Activated B cell treated with CpG ODN at 0.5 μM for 24 hours (primary cell): ENCODE measurements at regions of chr17 and their contacts with region 1.

Region 1: GRCh38 chr17:59619293-59620063 is at the start of gene CLTC:
- DNase-seq: peak; percentile 89
- ATAC-seq: peak; percentile 83
- H3K4me3 Mint-ChIP-seq: peak within 1 kb of the TSS; percentile 94
- H3K27ac Mint-ChIP-seq: peak within 1 kb of the TSS; percentile 98
- H3K4me1 Mint-ChIP-seq: peaks cover 59% of the 10 kb centered on the region
- H3K27me3 Mint-ChIP-seq: no peaks in the 10 kb centered on the region
- CTCF ChIP-seq: no peak
- total RNA-seq, gene CLTC: 148 and 189 TPM in 2 replicates

Region 2: DNA sequence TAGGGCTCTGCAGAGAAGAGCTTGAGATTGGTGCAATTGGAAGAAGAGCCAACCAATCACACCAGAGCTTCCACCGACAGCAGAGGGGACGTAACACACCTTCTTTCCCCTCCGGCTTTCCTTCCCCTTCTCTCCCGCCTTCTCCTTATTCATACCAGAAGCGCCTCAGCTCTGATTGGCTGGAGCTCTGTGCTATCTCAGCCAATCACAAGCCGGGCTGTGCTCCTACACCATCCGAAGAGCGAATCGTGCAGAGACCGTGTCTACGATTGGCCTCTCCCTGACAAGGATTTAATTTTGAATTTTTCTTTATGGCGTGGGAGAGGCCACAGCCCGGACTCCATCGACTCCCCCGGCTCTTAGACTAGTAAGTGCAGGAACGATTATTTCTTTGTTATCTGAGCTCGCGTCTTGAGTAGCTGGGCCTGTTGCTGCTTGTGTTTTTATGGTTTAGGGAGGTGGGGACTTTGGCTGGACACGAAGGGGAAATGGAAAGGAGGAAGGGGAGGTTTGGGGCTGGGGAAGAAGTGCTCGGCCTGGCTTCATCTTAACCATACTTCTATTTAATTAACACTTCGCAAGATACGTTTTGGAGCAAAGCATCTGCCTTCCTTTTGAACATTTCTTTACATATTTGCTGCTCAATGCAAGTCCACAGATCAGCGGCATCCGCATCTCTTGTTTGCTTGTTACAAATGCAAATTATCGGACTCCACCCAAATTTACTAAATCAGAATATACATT is 463.9 kb before region 1 on chr17 and contains the start of gene PRR11:
- CTCF ChIA-PET with region 1: no interaction called
- POLR2A ChIA-PET with region 1: interaction called, 6 read pairs
- intact Hi-C with region 1: loop called (anchors 1 kb)
- DNase-seq: peak; percentile 65
- ATAC-seq: peak; percentile 88
- H3K4me3 Mint-ChIP-seq: no peak within 1 kb of the TSS
- H3K27ac Mint-ChIP-seq: no peak within 1 kb of the TSS
- H3K4me1 Mint-ChIP-seq: peaks cover 16% of the 10 kb centered on the region
- H3K27me3 Mint-ChIP-seq: no peaks in the 10 kb centered on the region
- CTCF ChIP-seq: no peak
- total RNA-seq, gene PRR11: 2.4 and 4.8 TPM in 2 replicates

Region 3: DNA sequence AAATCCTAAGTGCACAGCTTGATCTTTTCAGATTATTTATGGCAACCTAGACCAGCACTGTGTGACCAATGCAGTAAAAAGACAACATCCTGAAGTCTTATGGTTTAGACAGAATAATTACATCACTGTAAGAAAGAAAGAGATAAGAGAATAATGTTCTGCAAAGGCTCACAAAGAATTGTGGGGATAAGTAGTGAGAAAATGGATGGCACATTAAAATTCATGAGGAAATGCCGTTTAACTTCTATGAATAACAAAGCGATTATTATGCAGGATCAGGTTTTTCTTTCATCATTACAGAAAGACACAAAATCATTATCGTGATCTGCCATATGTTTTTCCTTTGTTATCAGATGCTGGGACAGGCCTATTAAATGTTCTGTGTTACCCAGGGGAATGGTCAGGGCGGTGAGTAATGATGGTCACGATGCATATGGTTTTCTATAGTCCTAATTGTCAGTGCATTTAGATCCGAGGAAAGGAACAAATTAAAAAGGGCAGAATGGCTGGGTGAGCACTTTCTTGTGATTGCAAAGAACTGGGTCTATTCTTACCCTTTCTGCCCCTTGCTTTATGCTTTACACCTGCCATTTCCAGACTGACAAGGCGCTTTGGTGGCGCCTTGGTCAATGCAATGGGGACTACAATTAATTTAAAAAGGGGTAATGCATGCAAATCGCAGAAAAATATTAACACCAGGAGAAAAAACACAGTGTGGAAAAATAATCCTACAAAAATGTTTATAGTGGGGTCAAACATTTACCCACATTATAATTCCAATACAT is 72.2 kb before region 1 on chr17:
- CTCF ChIA-PET with region 1: no interaction called
- POLR2A ChIA-PET with region 1: no interaction called
- intact Hi-C with region 1: no loop called
- DNase-seq: no peak
- ATAC-seq: no peak
- H3K4me3 Mint-ChIP-seq: no peak overlapping the region
- H3K27ac Mint-ChIP-seq: no peak overlapping the region
- H3K4me1 Mint-ChIP-seq: no peaks in the 10 kb centered on the region
- H3K27me3 Mint-ChIP-seq: peaks cover 1% of the 10 kb centered on the region
- CTCF ChIP-seq: no peak

Region 4: DNA sequence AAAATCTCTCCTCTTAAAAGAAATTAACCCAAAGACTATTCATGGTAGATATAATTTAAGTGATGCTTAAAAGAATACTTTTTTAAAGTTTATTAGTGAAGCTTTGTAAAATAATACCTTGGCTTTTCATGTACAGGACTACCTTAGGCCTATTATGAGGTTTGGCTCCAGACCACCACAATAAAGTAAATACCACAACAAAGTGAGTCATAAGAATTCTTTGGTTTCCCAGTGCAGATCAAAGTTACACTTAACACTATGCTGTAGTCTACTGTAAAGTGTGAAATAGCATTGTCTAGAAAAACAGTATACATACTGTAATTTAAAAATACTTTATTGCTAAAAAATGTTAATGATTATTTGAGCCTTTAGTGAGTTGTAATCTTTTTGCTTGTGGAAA is 31.9 kb after region 1 on chr17:
- CTCF ChIA-PET with region 1: no interaction called
- POLR2A ChIA-PET with region 1: interaction called, 8 read pairs
- intact Hi-C with region 1: loop called (anchors 5 kb)
- DNase-seq: no peak
- ATAC-seq: no peak
- H3K4me3 Mint-ChIP-seq: no peak overlapping the region
- H3K27ac Mint-ChIP-seq: no peak overlapping the region
- H3K4me1 Mint-ChIP-seq: peaks cover 7% of the 10 kb centered on the region
- H3K27me3 Mint-ChIP-seq: no peaks in the 10 kb centered on the region
- CTCF ChIP-seq: no peak

Region 5: GRCh38 chr17:59707114-59707970 is 87.9 kb after region 1 on chr17 and contains the starts of genes PTRH2 and VMP1:
- CTCF ChIA-PET with region 1: no interaction called
- POLR2A ChIA-PET with region 1: interaction called, 45 read pairs
- intact Hi-C with region 1: loop called (anchors 1 kb)
- DNase-seq: peak; percentile 79
- ATAC-seq: peak; percentile 95
- H3K4me3 Mint-ChIP-seq: peak within 1 kb of the TSS; percentile 99
- H3K27ac Mint-ChIP-seq: peak within 1 kb of the TSS; percentile 97
- H3K4me1 Mint-ChIP-seq: peaks cover 72% of the 10 kb centered on the region
- H3K27me3 Mint-ChIP-seq: no peaks in the 10 kb centered on the region
- CTCF ChIP-seq: no peak
- total RNA-seq, gene PTRH2: 27.0 and 29.9 TPM in 2 replicates
- total RNA-seq, gene VMP1: 158 and 176 TPM in 2 replicates

Region 6: DNA sequence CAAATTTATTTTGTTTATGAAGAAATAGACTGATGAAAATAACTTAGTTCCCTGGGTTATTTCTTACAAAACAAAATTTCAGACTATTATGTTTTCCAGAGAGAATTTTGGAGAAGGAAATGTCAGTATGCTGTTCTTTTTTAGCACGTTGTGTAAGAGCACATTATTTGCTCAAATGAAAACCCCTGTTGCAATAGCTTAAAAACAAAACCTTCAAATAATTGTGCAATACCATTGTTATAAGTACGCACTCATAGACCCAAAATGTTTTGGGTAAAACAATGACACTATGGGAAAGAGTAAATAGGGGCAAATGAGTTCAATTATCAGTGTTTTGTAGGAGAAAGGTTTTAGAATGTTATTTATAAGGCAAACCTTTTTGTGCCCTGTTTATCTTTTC is 106.2 kb after region 1 on chr17:
- CTCF ChIA-PET with region 1: no interaction called
- POLR2A ChIA-PET with region 1: no interaction called
- intact Hi-C with region 1: no loop called
- DNase-seq: no peak
- ATAC-seq: no peak
- H3K4me3 Mint-ChIP-seq: no peak overlapping the region
- H3K27ac Mint-ChIP-seq: no peak overlapping the region
- H3K4me1 Mint-ChIP-seq: peaks cover 2% of the 10 kb centered on the region
- H3K27me3 Mint-ChIP-seq: no peaks in the 10 kb centered on the region
- CTCF ChIP-seq: no peak

Region 7: DNA sequence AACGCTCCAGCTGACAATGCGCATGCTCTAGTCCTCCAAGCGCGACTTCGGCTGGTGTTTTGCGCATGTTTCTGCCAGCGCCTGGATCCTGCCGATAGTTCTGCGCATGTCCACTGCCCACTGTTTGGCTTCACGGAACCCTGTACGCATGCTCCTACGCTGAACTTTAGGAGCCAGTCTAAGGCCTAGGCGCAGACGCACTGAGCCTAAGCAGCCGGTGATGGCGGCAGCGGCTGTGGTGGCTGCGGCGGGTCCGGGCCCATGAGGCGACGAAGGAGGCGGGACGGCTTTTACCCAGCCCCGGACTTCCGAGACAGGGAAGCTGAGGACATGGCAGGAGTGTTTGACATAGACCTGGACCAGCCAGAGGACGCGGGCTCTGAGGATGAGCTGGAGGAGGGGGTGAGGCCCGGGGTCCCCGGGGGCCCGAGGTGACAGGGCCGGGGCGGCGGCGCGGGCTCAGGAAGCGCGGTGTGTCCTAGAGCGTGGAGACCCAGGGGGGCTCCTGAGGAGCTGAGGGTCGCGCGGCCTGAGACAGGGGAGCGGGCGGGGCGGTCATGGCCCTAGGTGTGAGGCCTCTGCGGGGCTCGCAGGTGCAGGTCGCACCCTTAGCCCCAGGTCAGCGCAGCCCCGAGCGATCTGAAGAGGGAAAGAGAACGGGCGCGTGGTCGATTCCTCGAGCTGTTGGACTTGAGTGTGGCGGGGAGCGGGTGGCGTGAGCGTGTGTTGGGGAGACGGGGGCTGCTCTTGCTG is 273.6 kb after region 1 on chr17 and contains the starts of genes RPS6KB1 and TUBD1:
- CTCF ChIA-PET with region 1: no interaction called
- POLR2A ChIA-PET with region 1: interaction called, 13 read pairs
- intact Hi-C with region 1: loop called (anchors 1 kb)
- DNase-seq: peak; percentile 86
- ATAC-seq: peak; percentile 91
- H3K4me3 Mint-ChIP-seq: peak within 1 kb of the TSS; percentile 99
- H3K27ac Mint-ChIP-seq: peak within 1 kb of the TSS; percentile 98
- H3K4me1 Mint-ChIP-seq: peaks cover 44% of the 10 kb centered on the region
- H3K27me3 Mint-ChIP-seq: no peaks in the 10 kb centered on the region
- CTCF ChIP-seq: no peak
- total RNA-seq, gene RPS6KB1: 57.7 and 63.0 TPM in 2 replicates
- total RNA-seq, gene TUBD1: 10.5 and 15.1 TPM in 2 replicates